CD8-positive, alpha-beta T cell (primary cell): ENCODE measurements at regions of chr3 and their contacts with region 1.

Region 1: GRCh38 chr3:126208618-126209256 is 28.4 kb upstream of the ALDH1L1 start:
- DNase-seq: no peak
- ATAC-seq: no peak
- H3K4me3 ChIP-seq: no peak overlapping the region
- H3K4me3 Mint-ChIP-seq: no peak overlapping the region
- H3K27ac ChIP-seq: no peak overlapping the region
- H3K27ac Mint-ChIP-seq: no peak overlapping the region
- H3K4me1 ChIP-seq: peaks cover 4% of the 10 kb centered on the region
- H3K4me1 Mint-ChIP-seq: peaks cover 11% of the 10 kb centered on the region
- H3K27me3 ChIP-seq: peaks cover 0 to 7% of the 10 kb centered on the region in 2 experiments
- H3K27me3 Mint-ChIP-seq: peaks cover 53% of the 10 kb centered on the region
- CTCF ChIP-seq: no peak

Region 2: DNA sequence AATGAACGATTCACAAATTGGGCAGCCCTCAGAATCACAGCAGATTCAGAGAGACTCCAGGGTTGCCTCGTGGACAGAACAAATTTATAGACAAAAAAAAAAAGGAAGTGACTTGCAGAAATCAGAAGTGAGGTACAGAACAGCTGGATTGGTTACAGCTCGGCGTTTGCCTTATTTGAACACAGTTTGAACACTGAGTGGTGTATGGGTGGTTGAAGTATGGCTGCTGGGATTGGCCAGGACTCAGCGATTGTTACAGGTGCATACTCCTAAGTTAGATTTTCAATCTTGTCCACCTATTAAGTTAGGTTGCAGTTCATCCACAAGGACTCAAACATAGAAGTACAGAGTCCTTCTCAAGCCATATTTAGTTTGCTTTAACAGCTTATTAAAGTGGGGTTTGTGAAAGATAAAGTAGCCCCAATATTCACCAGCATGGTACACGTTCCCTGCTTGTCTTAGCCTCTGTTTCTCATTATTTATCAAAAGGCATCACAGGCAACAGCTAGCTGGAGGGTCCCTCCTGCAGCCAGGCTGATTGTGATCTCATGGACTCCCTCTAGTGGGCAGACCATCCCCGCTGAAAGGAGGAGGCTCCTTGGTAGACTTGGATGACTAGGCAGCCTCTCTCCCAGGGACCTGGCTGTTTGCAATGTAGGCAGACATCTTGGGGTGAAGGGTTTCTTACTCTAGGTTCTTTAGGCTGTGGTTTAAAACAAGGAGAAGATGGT is 10.7 kb before region 1 on chr3:
- CTCF ChIA-PET with region 1: interaction called, 10 read pairs
- POLR2A ChIA-PET with region 1: no interaction called
- intact Hi-C with region 1: no loop called
- DNase-seq: peak in 8 of 9 experiments; percentile 24 to 61 (median 38)
- ATAC-seq: no peak
- H3K4me3 ChIP-seq: no peak overlapping the region
- H3K4me3 Mint-ChIP-seq: no peak overlapping the region
- H3K27ac ChIP-seq: no peak overlapping the region
- H3K27ac Mint-ChIP-seq: no peak overlapping the region
- H3K4me1 ChIP-seq: no peaks in the 10 kb centered on the region
- H3K4me1 Mint-ChIP-seq: no peaks in the 10 kb centered on the region
- H3K27me3 ChIP-seq: no peaks in the 10 kb centered on the region
- H3K27me3 Mint-ChIP-seq: peaks cover 14% of the 10 kb centered on the region
- CTCF ChIP-seq: no peak

Region 3: DNA sequence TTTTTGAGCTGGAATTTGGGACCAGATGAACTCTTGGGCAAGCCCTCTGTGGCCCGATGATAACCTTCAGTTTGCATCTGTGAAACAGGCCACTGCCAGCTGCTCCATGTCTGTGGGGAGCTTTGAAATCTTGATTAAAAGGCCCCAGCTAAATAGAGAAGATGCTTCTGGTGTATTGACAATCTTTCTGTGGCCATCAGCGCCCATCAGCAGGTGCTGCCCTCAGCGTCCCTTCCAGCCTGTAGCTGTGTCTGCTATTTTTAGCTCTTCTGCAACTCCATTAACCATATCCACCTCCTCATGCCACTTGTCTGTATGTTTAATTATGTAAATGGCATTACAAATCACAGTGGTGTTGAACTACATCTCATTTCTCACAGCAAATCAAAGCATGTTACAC is 549.3 kb after region 1 on chr3:
- CTCF ChIA-PET with region 1: no interaction called
- POLR2A ChIA-PET with region 1: no interaction called
- intact Hi-C with region 1: no loop called
- DNase-seq: no peak
- ATAC-seq: no peak
- H3K4me3 ChIP-seq: no peak overlapping the region
- H3K4me3 Mint-ChIP-seq: no peak overlapping the region
- H3K27ac ChIP-seq: no peak overlapping the region
- H3K27ac Mint-ChIP-seq: no peak overlapping the region
- H3K4me1 ChIP-seq: no peaks in the 10 kb centered on the region
- H3K4me1 Mint-ChIP-seq: no peaks in the 10 kb centered on the region
- H3K27me3 ChIP-seq: no peaks in the 10 kb centered on the region
- H3K27me3 Mint-ChIP-seq: no peaks in the 10 kb centered on the region
- CTCF ChIP-seq: no peak